ENCODE measurements at regions of chr22 and their contacts with region 1.

Region 1: DNA sequence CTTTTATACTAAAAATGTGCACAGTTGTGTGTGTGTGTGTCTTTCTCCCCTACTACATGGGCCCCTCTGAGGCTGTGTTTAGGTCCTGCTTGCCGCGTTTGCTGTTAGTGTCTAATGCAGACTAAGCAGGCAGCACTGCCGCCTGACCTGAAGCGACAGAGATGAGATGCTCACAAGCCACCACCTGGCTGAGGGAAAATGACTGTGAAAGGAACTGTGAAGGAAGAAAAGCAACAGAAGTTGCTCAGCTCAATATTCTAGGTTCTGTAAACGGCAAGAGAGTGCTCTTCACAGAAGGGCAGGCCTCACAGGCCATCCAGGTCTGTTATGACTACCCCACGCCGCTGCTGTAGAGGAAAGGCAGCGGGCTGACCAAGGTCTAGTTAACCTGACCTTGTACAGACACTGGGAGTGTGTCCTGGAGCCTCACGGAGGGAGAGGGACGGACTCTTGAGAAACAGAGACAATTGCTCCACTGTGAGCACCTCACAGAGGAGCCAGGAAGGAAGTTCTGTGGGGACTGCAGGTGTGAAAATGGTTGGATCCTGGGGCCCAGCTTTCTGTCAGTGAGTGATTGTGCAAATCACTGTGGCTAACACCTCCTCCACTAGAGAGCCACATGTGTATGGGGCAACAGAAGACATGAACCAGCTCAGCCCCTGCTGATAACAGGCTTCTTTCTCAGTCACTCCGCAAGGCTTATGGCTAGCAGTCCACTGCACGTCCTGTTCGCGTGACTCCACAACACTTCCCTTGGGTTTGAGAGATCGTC is 31.3 kb upstream of the YPEL1 start:
- H3K4me3 Mint-ChIP-seq: no peak overlapping the region
- H3K27ac Mint-ChIP-seq: no peak overlapping the region
- H3K4me1 Mint-ChIP-seq: peaks cover 18% of the 10 kb centered on the region
- H3K27me3 Mint-ChIP-seq: no peaks in the 10 kb centered on the region

Region 2: GRCh38 chr22:21707677-21708076 is 59.2 kb before region 1 on chr22:
- intact Hi-C with region 1: loop called (anchors 10 kb)
- H3K4me3 Mint-ChIP-seq: no peak overlapping the region
- H3K27ac Mint-ChIP-seq: no peak overlapping the region
- H3K4me1 Mint-ChIP-seq: no peaks in the 10 kb centered on the region
- H3K27me3 Mint-ChIP-seq: no peaks in the 10 kb centered on the region

Region 3: DNA sequence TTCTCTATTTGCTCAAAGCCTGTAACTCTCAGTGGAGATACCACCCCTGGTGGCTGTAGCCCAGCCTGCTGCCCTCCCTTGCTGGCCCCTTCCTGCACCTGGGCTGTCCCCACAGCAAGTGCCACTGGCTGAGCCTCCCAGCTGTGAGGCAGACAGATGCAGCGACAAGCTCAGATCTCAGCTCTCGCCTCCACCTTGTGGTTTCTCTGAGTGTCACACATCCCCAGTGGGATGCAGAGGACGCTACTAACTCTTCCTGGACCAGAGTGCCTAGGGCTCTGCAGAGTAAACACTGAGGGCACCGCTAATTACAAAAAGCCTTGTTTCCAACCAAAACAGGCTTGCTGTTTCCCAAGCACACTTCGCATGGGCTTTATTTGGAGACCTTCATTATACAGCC is 40.2 kb before region 1 on chr22:
- intact Hi-C with region 1: no loop called
- H3K4me3 Mint-ChIP-seq: no peak overlapping the region
- H3K27ac Mint-ChIP-seq: no peak overlapping the region
- H3K4me1 Mint-ChIP-seq: no peaks in the 10 kb centered on the region
- H3K27me3 Mint-ChIP-seq: no peaks in the 10 kb centered on the region

Region 4: DNA sequence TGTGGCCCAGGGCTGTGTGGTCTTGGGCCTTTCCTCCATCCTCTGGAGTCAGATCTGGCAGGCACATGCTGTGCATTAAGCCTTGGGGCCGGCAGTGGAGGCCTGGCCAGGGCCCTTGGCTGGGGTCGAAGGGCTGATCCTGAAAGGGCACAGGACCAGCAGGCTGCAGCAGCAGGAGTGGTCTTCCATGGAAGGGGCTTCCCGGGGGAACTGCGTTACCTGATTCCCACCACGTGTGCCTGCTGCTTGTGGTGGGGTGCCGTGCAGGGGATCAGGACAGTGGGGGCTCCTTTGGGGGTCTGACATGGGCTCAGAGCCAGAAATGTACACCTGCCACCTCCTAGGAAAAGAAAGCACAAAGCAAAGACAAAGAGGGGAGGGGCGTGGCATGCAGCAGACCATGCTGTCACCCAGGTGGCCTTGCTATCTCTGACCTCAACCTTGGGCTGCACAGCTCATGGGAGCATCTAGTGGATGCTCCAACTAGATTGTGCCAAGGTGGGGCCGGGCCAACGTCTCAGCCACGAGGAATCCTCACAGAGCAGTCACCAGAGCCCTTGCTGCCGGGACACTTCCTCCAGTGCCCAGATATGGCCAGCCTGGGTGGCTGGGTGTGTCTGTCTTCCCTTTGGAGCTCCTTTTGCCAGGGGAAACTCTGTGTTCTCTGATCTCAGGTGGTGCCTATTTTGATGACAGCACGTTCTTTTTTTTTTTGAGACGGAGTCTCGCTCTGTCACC is 13.3 kb before region 1 on chr22:
- intact Hi-C with region 1: no loop called
- H3K4me3 Mint-ChIP-seq: no peak overlapping the region
- H3K27ac Mint-ChIP-seq: no peak overlapping the region
- H3K4me1 Mint-ChIP-seq: peaks cover 21% of the 10 kb centered on the region
- H3K27me3 Mint-ChIP-seq: no peaks in the 10 kb centered on the region

Region 5: DNA sequence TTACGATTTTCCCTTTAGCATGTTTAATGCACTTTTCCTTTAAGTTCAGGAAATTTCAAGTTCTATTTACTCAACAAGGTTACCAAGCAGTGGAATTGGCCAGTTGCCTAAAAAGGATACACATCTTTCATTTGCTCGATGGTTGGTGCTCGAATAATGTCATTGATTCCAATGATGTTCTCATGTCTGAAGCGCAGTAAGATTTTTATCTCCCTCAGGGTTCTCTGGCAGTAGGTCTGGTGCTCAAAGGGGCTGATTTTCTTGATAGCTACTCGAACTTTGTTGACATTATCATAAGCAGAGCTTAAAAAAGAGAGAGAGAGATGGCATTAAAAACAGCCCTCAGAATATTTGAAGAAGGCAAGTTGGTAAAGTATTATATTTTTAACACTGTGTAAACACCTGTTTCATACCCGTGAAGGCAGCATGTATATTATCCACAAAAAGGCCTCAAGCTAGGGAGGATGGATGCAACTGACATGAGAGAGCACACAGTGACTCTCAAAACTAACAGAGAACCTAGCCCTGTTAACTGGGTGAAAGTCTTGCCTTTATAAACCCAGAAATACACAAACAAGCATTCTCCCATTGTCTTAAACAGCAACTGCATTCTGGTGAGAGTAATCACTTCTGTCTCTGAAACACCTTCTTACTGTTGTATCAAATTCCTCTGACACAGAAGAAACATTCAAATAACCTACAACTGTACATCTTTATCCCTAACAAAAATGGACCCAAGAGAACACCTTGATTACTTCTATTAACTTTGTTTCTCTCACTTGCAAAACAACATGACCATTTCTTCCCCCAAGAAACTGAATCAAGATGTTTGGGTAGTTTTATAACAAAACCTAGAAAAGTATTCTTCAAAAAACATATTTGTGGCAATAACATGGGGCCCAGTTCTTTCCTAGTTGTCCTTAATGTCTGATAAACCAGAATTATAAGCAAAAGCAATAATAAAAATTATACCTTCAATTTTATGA is 41.0 kb after region 1 on chr22:
- intact Hi-C with region 1: loop called (anchors 5 kb)
- H3K4me3 Mint-ChIP-seq: no peak overlapping the region
- H3K27ac Mint-ChIP-seq: peak overlapping the region; percentile 2
- H3K4me1 Mint-ChIP-seq: peaks cover 41% of the 10 kb centered on the region
- H3K27me3 Mint-ChIP-seq: no peaks in the 10 kb centered on the region